Psoas muscle (tissue), 8 donors: ENCODE measurements at regions of chr17 and their contacts with region 1.

Region 1: GRCh38 chr17:65455972-65456343 is 105.5 kb downstream of the AXIN2 start:
- DNase-seq: peak in 1 of 2 donors; percentile 64
- ATAC-seq: peak; percentile 82 to 90 (median 86)
- H3K4me3 ChIP-seq: peak overlapping the region; percentile 31
- H3K27ac ChIP-seq: peak overlapping the region; percentile 62
- H3K4me1 ChIP-seq: peaks cover 28% of the 10 kb centered on the region
- H3K27me3 ChIP-seq: no peaks in the 10 kb centered on the region
- CTCF ChIP-seq: peak; percentile 42

Region 2: GRCh38 chr17:65407017-65407416 is 48.9 kb before region 1 on chr17:
- intact Hi-C with region 1: no loop called
- DNase-seq: no peak
- ATAC-seq: peak in 3 of 4 donors; percentile 64 to 89 (median 87)
- H3K4me3 ChIP-seq: no peak overlapping the region
- H3K27ac ChIP-seq: no peak overlapping the region
- H3K4me1 ChIP-seq: peaks cover 14% of the 10 kb centered on the region
- H3K27me3 ChIP-seq: no peaks in the 10 kb centered on the region
- CTCF ChIP-seq: no peak

Region 3: DNA sequence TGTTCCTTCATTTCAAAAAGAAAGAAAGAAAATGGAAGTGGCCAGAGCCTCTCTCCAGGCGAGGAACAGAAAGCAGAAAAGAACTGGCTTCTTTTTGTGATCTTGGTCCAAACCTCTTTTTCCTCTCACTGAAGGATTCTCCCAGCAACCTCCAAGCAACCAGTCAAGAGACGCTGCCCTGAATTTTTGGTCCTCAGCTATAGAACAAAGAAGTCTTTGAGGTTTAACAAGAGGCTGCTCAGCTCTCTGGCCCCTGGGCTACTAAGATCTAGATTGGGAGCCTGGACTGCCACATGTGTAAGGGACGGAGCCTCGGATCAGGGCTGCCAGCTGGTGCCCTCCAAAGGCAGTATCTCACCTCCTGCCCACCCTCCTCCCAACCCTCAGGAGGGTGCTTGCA is 42.9 kb after region 1 on chr17:
- intact Hi-C with region 1: no loop called
- DNase-seq: no peak
- ATAC-seq: no peak
- H3K4me3 ChIP-seq: no peak overlapping the region
- H3K27ac ChIP-seq: no peak overlapping the region
- H3K4me1 ChIP-seq: no peaks in the 10 kb centered on the region
- H3K27me3 ChIP-seq: peaks cover 0 to 2% (median 0%) of the 10 kb centered on the region in 3 donors
- CTCF ChIP-seq: no peak

Region 4: GRCh38 chr17:65561394-65562205 is 105.6 kb after region 1 on chr17 and contains the start of gene AXIN2:
- intact Hi-C with region 1: loop called (anchors 2 kb)
- DNase-seq: peak; percentile 93 to 95
- ATAC-seq: peak; percentile 71 to 87 (median 80)
- H3K4me3 ChIP-seq: no peak within 1 kb of the TSS
- H3K27ac ChIP-seq: no peak within 1 kb of the TSS
- H3K4me1 ChIP-seq: peaks cover 34% of the 10 kb centered on the region
- H3K27me3 ChIP-seq: no peaks in the 10 kb centered on the region
- CTCF ChIP-seq: no peak
- total RNA-seq, gene AXIN2: 6.0 to 19.1 (median 10.0) TPM

Region 5: DNA sequence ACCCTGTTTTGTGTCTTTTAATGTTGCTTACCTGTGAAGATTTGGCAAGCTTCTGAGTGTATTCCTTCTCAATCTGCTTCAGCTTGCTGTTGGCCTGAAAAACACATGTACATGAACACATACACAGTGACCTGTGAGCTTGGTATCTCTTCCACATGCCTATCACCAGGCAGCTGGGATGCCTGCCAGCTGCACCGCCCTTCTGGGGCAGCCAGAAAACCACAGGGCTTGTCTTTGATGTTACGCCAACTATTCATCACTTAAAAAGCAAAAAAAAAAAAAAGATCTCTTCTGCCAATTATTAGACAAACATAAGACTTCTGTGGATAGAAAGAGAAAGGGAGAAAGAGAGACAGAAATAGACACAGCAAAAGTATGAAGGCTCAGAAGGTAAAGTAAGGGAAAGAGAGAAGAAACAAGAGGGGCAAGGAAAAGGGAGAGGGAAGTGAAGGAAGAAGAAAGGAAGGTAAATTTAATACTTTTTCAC is 294.7 kb after region 1 on chr17:
- intact Hi-C with region 1: loop called in 1 of 2 experiments (anchors 10 kb)
- DNase-seq: peak; percentile 65 to 69
- ATAC-seq: peak; percentile 73 to 94 (median 88)
- H3K4me3 ChIP-seq: no peak overlapping the region
- H3K27ac ChIP-seq: peak overlapping the region; percentile 56
- H3K4me1 ChIP-seq: peaks cover 13% of the 10 kb centered on the region
- H3K27me3 ChIP-seq: no peaks in the 10 kb centered on the region
- CTCF ChIP-seq: no peak

Region 6: GRCh38 chr17:65794572-65794971 is 338.6 kb after region 1 on chr17:
- intact Hi-C with region 1: loop called in 1 of 2 experiments (anchors 10 kb)
- DNase-seq: no peak
- ATAC-seq: no peak
- H3K4me3 ChIP-seq: no peak overlapping the region
- H3K27ac ChIP-seq: no peak overlapping the region
- H3K4me1 ChIP-seq: no peaks in the 10 kb centered on the region
- H3K27me3 ChIP-seq: no peaks in the 10 kb centered on the region
- CTCF ChIP-seq: peak; percentile 48